ENCODE measurements at regions of chr2 and their contacts with region 1.

Region 1: GRCh38 chr2:200713003-200713703 is 98.6 kb upstream of the BZW1 start:
- DNase-seq: peak; percentile 68
- ATAC-seq: peak; percentile 99
- H3K4me3 Mint-ChIP-seq: peak overlapping the region; percentile 76
- H3K27ac Mint-ChIP-seq: peak overlapping the region; percentile 95
- H3K4me1 Mint-ChIP-seq: peaks cover 16% of the 10 kb centered on the region
- H3K27me3 Mint-ChIP-seq: peaks cover 2% of the 10 kb centered on the region
- CTCF ChIP-seq: no peak

Region 2: DNA sequence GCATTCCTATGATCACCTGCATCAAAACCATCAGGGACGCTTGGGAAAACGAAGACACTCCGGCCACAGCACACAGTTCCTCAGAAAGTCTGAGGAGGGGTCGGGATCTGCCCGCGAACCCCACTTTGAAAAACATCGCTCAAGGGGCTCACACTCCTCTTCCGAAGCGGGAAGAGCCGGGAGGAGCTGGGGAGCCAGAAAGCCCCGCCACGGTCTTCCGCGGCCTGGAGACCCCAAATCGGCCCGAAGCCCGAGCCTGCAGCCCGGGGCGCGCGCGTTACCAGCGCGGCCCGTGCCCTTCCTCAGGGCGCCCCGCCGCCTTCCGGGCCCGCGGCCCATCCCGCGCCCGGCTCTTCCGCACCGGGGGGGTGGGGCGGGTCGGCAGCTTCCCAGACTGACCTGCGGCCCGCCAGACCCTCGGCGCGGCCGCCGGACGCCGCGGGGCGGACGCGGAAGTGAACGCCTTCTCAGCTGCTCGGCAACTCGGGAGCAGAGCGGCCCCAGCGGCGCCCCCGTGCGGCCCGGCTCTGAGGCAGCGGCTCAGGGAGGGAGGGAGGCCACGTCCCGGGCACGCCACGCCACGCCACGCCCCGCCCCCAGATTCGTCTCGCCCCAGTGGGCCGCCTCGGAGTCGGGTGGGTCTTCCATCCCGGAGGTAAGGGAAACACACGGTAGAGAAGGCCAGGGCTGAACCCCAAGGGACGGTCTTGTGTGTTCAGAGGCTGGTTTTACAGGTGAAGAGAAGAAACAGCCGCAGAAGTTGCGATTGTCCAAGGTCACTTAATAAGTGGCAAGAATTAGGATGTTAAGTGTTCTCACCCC is 203.3 kb before region 1 on chr2 and contains the start of gene KCTD18:
- CTCF ChIA-PET with region 1: no interaction called
- POLR2A ChIA-PET with region 1: interaction called, 6 read pairs
- intact Hi-C with region 1: loop called (anchors 2 kb)
- DNase-seq: peak; percentile 93
- ATAC-seq: peak; percentile 99
- H3K4me3 Mint-ChIP-seq: peak within 1 kb of the TSS; percentile 90
- H3K27ac Mint-ChIP-seq: peak within 1 kb of the TSS; percentile 88
- H3K4me1 Mint-ChIP-seq: peaks cover 27% of the 10 kb centered on the region
- H3K27me3 Mint-ChIP-seq: peaks cover 2% of the 10 kb centered on the region
- CTCF ChIP-seq: peak; percentile 62
- total RNA-seq, gene KCTD18: 18.5 and 18.9 TPM in 2 replicates

Region 3: DNA sequence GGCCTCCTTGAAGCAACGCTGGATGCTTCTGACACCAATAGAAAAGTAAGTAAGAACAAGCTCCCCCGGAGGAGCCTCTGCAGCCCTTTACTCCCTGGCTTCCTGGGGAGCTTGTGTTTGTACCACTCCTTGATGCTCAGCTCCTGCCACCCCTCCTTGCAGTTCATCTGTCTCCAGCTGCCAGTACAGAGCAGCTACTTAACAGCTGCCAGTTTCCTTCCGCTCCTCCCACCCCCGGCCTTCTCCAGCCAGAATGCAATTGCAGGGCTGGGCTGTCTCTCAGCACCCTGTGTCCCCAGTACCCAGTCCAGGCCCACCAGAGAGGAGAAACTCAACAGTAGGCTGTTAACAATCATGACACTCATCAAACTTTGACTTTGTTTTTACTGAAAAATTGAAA is 18.0 kb before region 1 on chr2:
- CTCF ChIA-PET with region 1: no interaction called
- POLR2A ChIA-PET with region 1: no interaction called
- intact Hi-C with region 1: no loop called
- DNase-seq: no peak
- ATAC-seq: peak; percentile 64
- H3K4me3 Mint-ChIP-seq: no peak overlapping the region
- H3K27ac Mint-ChIP-seq: no peak overlapping the region
- H3K4me1 Mint-ChIP-seq: peaks cover 5% of the 10 kb centered on the region
- H3K27me3 Mint-ChIP-seq: peaks cover 9% of the 10 kb centered on the region
- CTCF ChIP-seq: no peak

Region 4: DNA sequence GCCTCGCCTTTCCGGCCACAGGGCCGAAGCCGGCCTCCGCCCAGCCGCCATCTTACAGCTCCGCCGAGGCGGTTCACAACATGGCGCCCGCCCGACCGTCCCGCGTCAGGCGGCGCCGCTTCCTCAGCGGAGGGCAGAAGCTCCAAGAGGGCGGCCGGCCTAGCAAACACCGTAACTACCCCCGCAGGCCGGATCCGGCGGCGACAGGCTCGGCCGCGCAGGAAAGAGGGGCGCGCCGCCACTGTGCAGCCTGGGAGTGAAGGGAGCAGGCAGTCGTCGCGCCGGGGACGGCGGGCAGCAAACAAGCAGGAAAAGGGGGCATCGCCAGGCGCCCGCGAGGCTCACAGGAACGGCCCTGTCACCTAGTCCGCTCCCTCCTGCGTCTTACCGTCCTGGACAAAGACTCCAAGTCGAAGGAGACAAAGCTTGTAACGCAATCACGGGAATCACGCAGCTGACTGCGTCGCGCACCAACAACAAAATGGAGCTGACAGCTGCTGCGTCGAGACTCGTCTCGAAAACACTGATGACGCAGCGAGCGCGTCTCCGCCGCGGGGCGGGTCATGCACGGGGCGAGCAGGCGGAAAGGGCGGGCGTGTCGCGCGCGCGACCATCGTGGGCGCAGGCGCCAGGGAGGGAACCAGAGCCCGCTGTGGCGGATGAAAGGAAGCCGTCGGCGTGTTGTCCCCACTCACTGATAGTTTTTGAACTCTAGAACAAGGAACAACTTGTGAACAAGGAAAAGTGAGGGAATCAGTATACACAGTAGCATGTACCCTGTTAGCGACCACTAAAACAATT is 151.2 kb after region 1 on chr2 and contains the start of gene CLK1:
- CTCF ChIA-PET with region 1: interaction called, 6 read pairs
- POLR2A ChIA-PET with region 1: interaction called, 41 read pairs
- intact Hi-C with region 1: loop called (anchors 1 kb)
- DNase-seq: peak; percentile 90
- ATAC-seq: peak; percentile 82
- H3K4me3 Mint-ChIP-seq: peak within 1 kb of the TSS; percentile 100
- H3K27ac Mint-ChIP-seq: peak within 1 kb of the TSS; percentile 100
- H3K4me1 Mint-ChIP-seq: peaks cover 41% of the 10 kb centered on the region
- H3K27me3 Mint-ChIP-seq: no peaks in the 10 kb centered on the region
- CTCF ChIP-seq: no peak
- total RNA-seq, gene CLK1: 173 and 203 TPM in 2 replicates

Region 5: DNA sequence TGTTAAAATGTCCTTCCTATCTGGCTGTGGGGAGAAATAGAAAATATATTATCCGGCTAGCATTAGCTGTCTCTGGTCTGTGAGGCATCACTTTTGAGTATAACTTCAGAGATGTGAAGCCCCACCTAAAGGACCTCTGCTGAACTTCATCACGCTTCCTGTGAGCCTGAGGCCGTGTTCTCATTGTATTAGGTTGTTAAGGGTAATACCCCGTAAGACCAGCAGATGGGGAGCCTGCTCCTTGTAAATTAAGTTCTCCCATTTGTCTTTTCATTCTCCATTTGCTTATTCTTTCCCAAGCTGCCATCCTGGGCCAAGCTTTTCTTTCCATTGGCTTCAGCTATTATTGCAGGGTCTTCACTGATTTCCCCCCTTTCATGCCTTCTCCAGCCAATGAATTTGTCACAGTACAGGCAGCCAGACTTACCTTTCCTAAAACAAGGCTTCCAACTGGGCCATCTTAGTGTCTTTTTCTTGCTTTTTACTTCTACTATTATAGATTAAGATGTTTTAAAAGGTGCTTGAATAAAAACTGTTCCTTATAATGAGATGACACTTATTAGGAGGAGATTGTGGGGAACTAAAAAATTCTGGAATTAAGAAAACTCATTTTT is 188.4 kb after region 1 on chr2:
- CTCF ChIA-PET with region 1: interaction called, 4 read pairs
- POLR2A ChIA-PET with region 1: no interaction called
- intact Hi-C with region 1: loop called (anchors 1 kb)
- DNase-seq: no peak
- ATAC-seq: peak; percentile 100
- H3K4me3 Mint-ChIP-seq: no peak overlapping the region
- H3K27ac Mint-ChIP-seq: peak overlapping the region; percentile 38
- H3K4me1 Mint-ChIP-seq: peaks cover 4% of the 10 kb centered on the region
- H3K27me3 Mint-ChIP-seq: no peaks in the 10 kb centered on the region
- CTCF ChIP-seq: peak; percentile 30

Region 6: GRCh38 chr2:201490291-201490690 is 777.1 kb after region 1 on chr2:
- CTCF ChIA-PET with region 1: no interaction called
- POLR2A ChIA-PET with region 1: no interaction called
- intact Hi-C with region 1: no loop called
- DNase-seq: no peak
- ATAC-seq: no peak
- H3K4me3 Mint-ChIP-seq: no peak overlapping the region
- H3K27ac Mint-ChIP-seq: no peak overlapping the region
- H3K4me1 Mint-ChIP-seq: no peaks in the 10 kb centered on the region
- H3K27me3 Mint-ChIP-seq: no peaks in the 10 kb centered on the region
- CTCF ChIP-seq: no peak

Region 7: GRCh38 chr2:201642579-201643215 is 929.5 kb after region 1 on chr2:
- CTCF ChIA-PET with region 1: no interaction called
- POLR2A ChIA-PET with region 1: no interaction called
- intact Hi-C with region 1: loop called (anchors 10 kb)
- DNase-seq: peak; percentile 91
- ATAC-seq: peak; percentile 86
- H3K4me3 Mint-ChIP-seq: peak overlapping the region; percentile 95
- H3K27ac Mint-ChIP-seq: peak overlapping the region; percentile 91
- H3K4me1 Mint-ChIP-seq: peaks cover 9% of the 10 kb centered on the region
- H3K27me3 Mint-ChIP-seq: no peaks in the 10 kb centered on the region
- CTCF ChIP-seq: no peak

Region 8: GRCh38 chr2:202238234-202239197 is 1525.4 kb after region 1 on chr2 and contains the start of gene SUMO1:
- CTCF ChIA-PET with region 1: no interaction called
- POLR2A ChIA-PET with region 1: no interaction called
- intact Hi-C with region 1: loop called (anchors 10 kb)
- DNase-seq: peak; percentile 86
- ATAC-seq: peak; percentile 94
- H3K4me3 Mint-ChIP-seq: peak within 1 kb of the TSS; percentile 100
- H3K27ac Mint-ChIP-seq: peak within 1 kb of the TSS; percentile 93
- H3K4me1 Mint-ChIP-seq: peaks cover 36% of the 10 kb centered on the region
- H3K27me3 Mint-ChIP-seq: no peaks in the 10 kb centered on the region
- CTCF ChIP-seq: no peak
- total RNA-seq, gene SUMO1: 78.8 and 83.9 TPM in 2 replicates

Measured in activated B cell treated with CpG ODN at 0.5 μM for 24 hours (primary cell).